Aorta (tissue), 5 donors: ENCODE measurements at regions of chr2 and their contacts with region 1.

Region 1: DNA sequence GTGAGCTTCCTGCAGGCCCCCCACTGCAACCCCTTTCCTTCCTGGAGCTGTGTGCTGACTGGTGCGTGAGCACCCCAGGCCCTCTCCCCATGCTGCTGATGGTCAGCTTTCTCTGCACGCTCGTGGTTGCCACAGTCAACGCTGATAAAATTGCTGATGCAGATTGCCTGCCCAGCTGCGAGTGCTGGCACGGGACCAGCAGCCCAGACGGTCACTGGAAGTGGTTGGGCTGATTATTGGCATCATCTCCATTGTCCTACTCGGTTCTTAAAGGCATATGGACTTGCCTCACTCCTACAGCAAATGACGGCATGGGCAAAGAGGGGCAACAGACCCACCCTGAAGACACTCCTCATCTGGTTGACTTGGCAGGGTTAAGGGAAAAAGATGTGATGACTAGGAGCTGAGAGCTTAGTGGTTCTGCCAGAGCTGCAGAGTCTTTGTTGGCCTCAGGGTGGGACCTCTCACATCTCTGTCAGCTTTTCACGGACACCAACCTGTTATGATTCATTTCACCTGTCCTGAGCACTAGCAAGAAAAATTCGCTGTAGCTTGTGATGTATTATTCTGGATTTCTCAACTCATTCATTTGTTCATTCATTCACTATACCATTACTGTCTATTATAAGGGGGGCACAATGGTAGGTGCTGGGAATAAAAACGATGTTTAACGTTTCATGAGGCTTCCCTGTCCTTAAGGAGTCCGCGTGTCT is 38.4 kb downstream of the PAX8 start:
- DNase-seq: peak; percentile 94 to 96
- ATAC-seq: peak; percentile 72
- H3K4me3 ChIP-seq: no peak overlapping the region
- H3K27ac ChIP-seq: peak overlapping the region in 1 of 2 donors; percentile 50
- H3K4me1 ChIP-seq: peaks cover 3 to 4% of the 10 kb centered on the region in 2 donors
- H3K27me3 ChIP-seq: no peaks in the 10 kb centered on the region

Region 2: GRCh38 chr2:113203901-113204519 is 36.3 kb before region 1 on chr2:
- intact Hi-C with region 1: loop called in 1 of 2 experiments (anchors 5 kb)
- DNase-seq: peak; percentile 77 to 80
- ATAC-seq: peak; percentile 61
- H3K4me3 ChIP-seq: no peak overlapping the region
- H3K27ac ChIP-seq: no peak overlapping the region
- H3K4me1 ChIP-seq: no peaks in the 10 kb centered on the region
- H3K27me3 ChIP-seq: no peaks in the 10 kb centered on the region

Region 3: GRCh38 chr2:113342650-113343049 is 102.3 kb after region 1 on chr2:
- intact Hi-C with region 1: no loop called
- DNase-seq: peak in 1 of 2 donors; percentile 57
- ATAC-seq: no peak
- H3K4me3 ChIP-seq: no peak overlapping the region
- H3K27ac ChIP-seq: no peak overlapping the region
- H3K4me1 ChIP-seq: no peaks in the 10 kb centered on the region
- H3K27me3 ChIP-seq: no peaks in the 10 kb centered on the region